T-cell (primary cell): ENCODE measurements at regions of chr15 and their contacts with region 1.

Region 1: DNA sequence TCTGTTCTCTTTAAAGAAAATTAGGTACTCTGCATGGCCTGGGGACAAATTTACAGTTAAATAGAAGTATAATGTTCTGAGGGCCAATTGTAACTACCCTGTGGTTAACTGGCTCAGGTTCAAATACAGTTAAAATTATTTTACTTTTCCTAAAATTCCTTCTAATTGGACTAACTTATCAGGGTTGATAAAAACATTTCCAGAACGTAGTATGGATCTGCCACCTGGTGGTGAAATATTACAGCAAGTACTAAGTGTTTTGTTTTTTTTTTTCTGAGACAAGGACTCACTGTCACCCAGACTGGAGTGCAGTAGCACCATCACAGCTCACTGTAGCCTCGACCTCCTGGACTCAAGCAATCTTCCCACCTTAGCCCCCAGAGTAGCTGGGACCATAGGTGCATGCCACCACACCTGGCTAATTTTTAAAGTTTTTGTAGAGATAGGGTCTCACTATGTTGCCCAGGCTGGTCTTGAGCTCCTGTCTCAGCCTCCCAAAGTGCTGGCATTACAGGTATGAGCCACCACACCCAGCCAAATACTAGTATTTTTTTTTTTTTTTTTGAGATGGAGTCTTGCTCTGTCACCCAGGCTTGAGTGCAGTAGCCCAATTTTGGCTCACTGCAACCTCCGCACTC is 29.2 kb downstream of the NEO1 start:
- DNase-seq: peak in 9 of 35 experiments; percentile 1 to 69 (median 9)
- ATAC-seq: peak in 1 of 4 experiments; percentile 38
- H3K4me3 ChIP-seq: no peak overlapping the region
- H3K4me3 Mint-ChIP-seq: no peak overlapping the region
- H3K27ac ChIP-seq: no peak overlapping the region
- H3K27ac Mint-ChIP-seq: no peak overlapping the region
- H3K4me1 ChIP-seq: no peaks in the 10 kb centered on the region
- H3K4me1 Mint-ChIP-seq: no peaks in the 10 kb centered on the region
- H3K27me3 ChIP-seq: peaks cover 0 to 7% of the 10 kb centered on the region in 2 experiments
- H3K27me3 Mint-ChIP-seq: peaks cover 2 to 6% of the 10 kb centered on the region in 2 donors

Region 2: DNA sequence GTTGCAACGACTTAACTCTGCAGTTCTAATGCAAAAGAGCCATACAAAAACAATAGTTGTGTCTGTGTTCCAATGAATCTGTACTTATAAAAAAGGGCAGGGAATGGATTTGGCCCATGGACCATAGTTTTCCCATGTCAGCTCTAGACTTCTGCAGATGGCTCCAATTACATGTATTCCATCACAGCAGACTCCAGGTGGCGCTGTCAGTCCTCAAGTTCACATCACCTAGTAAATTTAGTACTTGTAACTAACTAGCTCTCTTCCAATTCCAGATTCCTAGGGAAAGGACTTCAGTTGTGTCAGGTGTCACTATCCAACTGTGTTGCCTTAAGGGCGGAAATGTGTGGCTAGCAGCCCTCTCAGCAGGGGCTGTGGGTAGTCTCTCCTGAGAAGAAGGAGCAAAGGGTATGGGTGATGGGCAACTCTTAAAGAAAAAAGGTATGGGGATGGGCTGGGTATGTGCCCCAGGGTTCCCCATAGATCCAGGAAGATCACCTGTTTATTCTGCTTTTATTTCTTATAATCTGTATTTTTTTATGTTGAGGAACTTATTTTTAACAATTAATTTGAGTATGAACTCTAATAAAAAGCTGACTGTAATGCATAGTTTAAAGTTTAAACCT is 359.3 kb before region 1 on chr15:
- CTCF ChIA-PET with region 1: interaction called, 5 to 21 read pairs
- POLR2A ChIA-PET with region 1: no interaction called
- DNase-seq: peak; percentile 28 to 78 (median 59)
- ATAC-seq: peak in 1 of 4 experiments; percentile 42
- H3K4me3 ChIP-seq: no peak overlapping the region
- H3K4me3 Mint-ChIP-seq: no peak overlapping the region
- H3K27ac ChIP-seq: no peak overlapping the region
- H3K27ac Mint-ChIP-seq: no peak overlapping the region
- H3K4me1 ChIP-seq: no peaks in the 10 kb centered on the region
- H3K4me1 Mint-ChIP-seq: peaks cover 0 to 3% (median 0%) of the 10 kb centered on the region in 3 donors
- H3K27me3 ChIP-seq: no peaks in the 10 kb centered on the region
- H3K27me3 Mint-ChIP-seq: no peaks in the 10 kb centered on the region

Region 3: DNA sequence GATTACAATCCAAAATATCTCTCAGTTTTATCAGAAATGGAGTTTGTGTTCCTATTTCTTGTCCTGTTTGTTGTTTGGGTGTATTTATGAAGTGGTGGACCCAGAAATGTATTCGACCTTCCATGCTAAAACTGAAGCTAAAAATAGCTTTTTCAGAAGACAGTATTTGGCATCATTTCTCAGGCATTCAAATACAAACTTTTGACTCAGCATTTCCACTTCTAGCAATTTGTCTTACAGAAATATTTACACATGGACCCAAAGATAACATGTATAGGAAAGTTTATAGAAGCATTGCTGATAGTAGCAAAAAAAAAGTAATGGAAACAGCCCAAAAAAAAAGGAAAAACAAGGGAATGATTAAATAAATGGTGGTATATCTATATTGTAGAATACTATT is 131.0 kb after region 1 on chr15:
- CTCF ChIA-PET with region 1: no interaction called
- POLR2A ChIA-PET with region 1: no interaction called
- DNase-seq: no peak
- ATAC-seq: no peak
- H3K4me3 ChIP-seq: no peak overlapping the region
- H3K4me3 Mint-ChIP-seq: no peak overlapping the region
- H3K27ac ChIP-seq: no peak overlapping the region
- H3K27ac Mint-ChIP-seq: no peak overlapping the region
- H3K4me1 ChIP-seq: no peaks in the 10 kb centered on the region
- H3K4me1 Mint-ChIP-seq: no peaks in the 10 kb centered on the region
- H3K27me3 ChIP-seq: peaks cover 0 to 3% of the 10 kb centered on the region in 2 experiments
- H3K27me3 Mint-ChIP-seq: no peaks in the 10 kb centered on the region

Region 4: DNA sequence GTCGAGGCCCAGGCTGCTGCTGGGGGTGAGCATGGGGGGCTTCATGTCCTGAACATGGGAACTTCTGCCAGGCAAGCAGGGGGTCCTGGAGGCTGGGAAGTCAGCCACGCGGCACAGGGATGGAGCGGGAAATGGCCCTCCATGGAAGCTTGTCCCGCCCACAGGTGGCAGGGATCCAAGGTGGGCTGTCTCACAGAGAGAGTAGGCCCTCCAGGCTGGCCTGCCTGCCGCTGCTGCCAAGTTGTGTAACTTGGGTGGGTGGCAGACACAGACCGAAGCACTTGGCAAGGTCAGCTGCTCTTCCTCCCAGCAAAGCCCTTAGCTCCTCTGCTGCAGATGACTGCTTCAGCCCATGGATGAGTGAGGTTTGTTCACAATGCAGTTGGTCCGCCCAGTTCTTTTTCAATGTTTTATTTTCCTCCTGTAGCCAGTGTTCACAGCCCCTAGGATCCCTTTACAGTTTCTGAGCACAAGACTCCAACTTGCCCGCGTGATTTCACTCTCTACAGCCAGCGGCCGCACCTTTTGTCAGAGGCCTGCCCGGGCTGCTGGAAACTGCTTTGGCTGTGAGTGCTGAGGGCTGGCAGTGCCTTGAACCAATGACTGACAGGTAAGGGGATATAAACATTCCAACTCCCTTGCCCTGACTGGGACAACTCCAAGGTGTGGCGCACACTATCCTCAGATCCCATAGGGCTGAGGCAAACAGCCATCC is 260.6 kb after region 1 on chr15:
- CTCF ChIA-PET with region 1: no interaction called
- POLR2A ChIA-PET with region 1: no interaction called
- DNase-seq: no peak
- ATAC-seq: no peak
- H3K4me3 ChIP-seq: no peak overlapping the region
- H3K4me3 Mint-ChIP-seq: no peak overlapping the region
- H3K27ac ChIP-seq: no peak overlapping the region
- H3K27ac Mint-ChIP-seq: no peak overlapping the region
- H3K4me1 ChIP-seq: no peaks in the 10 kb centered on the region
- H3K4me1 Mint-ChIP-seq: no peaks in the 10 kb centered on the region
- H3K27me3 ChIP-seq: peaks cover 0 to 20% of the 10 kb centered on the region in 2 experiments
- H3K27me3 Mint-ChIP-seq: peaks cover 4 to 8% of the 10 kb centered on the region in 2 donors